ENCODE measurements at regions of chr4 and their contacts with region 1.

Region 1: GRCh38 chr4:73998040-73999011 is at the start of gene CXCL5:
- DNase-seq: peak; percentile 41
- H3K4me3 ChIP-seq: peak within 1 kb of the TSS; percentile 13 to 44 (median 40)
- H3K27ac ChIP-seq: no peak within 1 kb of the TSS
- H3K4me1 ChIP-seq: peaks cover 10% of the 10 kb centered on the region
- H3K27me3 ChIP-seq: no peaks in the 10 kb centered on the region
- CTCF ChIP-seq: peak in 1 of 2 donors; percentile 31
- POLR2A ChIP-seq: no peak
- total RNA-seq, gene CXCL5: 0.21 and 0.33 TPM in 2 replicates

Region 2: DNA sequence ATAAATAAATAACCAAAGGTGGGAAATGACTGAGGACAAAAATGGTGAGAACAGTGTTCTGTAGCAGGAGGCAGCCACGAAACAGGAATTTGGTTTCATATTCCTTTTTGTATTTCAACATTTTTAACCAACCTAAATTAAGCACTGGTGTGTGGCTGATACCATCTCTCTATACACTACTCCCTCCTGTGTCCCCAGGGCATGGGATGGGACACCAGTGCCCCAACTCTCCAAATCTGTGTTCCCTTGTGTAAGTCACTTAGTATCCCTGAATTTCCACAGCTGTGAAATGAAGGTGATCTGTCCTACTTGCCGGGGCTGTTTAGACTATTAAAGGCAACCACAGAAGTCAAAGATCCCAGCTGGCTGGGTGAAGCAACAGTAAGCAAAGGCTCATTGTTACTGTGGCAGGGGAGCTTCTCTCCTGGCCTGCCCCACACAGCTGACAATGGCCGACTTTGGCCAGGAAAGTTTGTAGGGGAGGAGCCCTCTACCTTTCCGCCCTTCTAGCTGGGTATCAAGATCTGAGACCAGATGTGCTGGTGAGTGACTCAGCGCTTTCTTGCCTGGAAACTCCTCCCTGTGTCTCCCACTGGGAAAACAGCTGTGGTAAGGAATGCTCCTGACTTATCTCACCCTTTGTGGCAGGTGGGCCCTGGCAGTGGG is 399.3 kb before region 1 on chr4:
- CTCF ChIA-PET with region 1: no interaction called
- POLR2A ChIA-PET with region 1: no interaction called
- dilution Hi-C with region 1: no loop called
- intact Hi-C with region 1: no loop called
- DNase-seq: peak; percentile 24
- H3K4me3 ChIP-seq: no peak overlapping the region
- H3K27ac ChIP-seq: no peak overlapping the region
- H3K4me1 ChIP-seq: no peaks in the 10 kb centered on the region
- H3K27me3 ChIP-seq: no peaks in the 10 kb centered on the region
- CTCF ChIP-seq: no peak
- POLR2A ChIP-seq: no peak

Region 3: GRCh38 chr4:74018771-74019170 is 20.4 kb after region 1 on chr4:
- CTCF ChIA-PET with region 1: interaction called, 3 read pairs
- POLR2A ChIA-PET with region 1: no interaction called
- dilution Hi-C with region 1: no loop called
- intact Hi-C with region 1: loop called (anchors 2 kb)
- DNase-seq: peak; percentile 21
- H3K4me3 ChIP-seq: no peak overlapping the region
- H3K27ac ChIP-seq: no peak overlapping the region
- H3K4me1 ChIP-seq: peaks cover 6% of the 10 kb centered on the region
- H3K27me3 ChIP-seq: peaks cover 0 to 5% of the 10 kb centered on the region in 2 experiments
- CTCF ChIP-seq: no peak
- POLR2A ChIP-seq: no peak

Region 4: DNA sequence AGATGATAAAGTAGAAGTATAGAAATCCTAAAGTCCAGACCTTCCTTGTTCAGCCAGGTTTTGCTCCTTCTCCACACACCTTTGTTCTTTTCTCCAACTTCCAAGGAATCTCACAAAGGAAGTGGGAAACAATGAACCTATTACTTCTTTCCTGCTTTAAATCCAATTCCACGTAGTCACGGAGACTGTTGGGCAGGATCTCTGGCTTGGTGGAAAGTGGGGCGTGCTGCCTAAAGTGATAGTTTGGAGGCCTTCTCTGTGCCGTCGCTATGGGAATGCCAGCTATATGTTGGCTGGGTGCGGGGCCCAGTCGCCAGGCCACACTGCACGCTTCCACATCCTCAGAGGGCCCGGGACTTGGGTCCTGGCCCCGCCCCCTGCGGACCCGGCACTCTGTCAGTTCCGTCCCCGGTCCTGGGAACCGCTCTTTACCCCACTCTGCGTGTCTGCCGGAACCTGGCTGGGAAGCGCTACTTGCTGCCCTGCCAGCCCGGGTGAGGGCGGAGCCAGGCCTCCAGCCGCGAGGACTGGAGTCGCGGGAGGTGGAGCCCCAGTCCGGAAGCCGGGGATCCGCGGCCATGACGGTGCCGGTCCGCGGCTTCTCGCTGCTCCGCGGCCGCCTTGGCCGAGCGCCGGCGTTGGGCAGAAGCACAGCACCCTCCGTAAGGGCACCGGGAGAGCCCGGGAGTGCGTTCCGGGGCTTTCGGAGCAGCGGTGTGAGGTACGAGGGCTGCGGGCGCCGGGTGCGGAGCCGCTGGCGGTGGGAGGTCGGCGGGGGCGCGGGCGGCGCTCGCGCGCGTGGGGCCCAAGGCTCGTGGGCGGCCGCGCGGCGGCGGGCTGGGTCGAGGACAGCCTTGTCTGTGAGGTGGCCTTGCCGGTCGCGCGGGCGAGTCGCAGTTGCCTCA is 159.5 kb after region 1 on chr4 and contains the start of gene MTHFD2L:
- CTCF ChIA-PET with region 1: no interaction called
- POLR2A ChIA-PET with region 1: no interaction called
- dilution Hi-C with region 1: no loop called
- intact Hi-C with region 1: no loop called
- DNase-seq: peak; percentile 96
- H3K4me3 ChIP-seq: peak within 1 kb of the TSS; percentile 73 to 97 (median 76)
- H3K27ac ChIP-seq: peak within 1 kb of the TSS; percentile 90
- H3K4me1 ChIP-seq: peaks cover 29% of the 10 kb centered on the region
- H3K27me3 ChIP-seq: no peaks in the 10 kb centered on the region
- CTCF ChIP-seq: no peak
- POLR2A ChIP-seq: peak; percentile 88
- total RNA-seq, gene MTHFD2L: 12.4 and 15.2 TPM in 2 replicates

Measured in endothelial cell of umbilical vein (primary cell).